ENCODE measurements at regions of chr1 and their contacts with region 1.

Region 1: DNA sequence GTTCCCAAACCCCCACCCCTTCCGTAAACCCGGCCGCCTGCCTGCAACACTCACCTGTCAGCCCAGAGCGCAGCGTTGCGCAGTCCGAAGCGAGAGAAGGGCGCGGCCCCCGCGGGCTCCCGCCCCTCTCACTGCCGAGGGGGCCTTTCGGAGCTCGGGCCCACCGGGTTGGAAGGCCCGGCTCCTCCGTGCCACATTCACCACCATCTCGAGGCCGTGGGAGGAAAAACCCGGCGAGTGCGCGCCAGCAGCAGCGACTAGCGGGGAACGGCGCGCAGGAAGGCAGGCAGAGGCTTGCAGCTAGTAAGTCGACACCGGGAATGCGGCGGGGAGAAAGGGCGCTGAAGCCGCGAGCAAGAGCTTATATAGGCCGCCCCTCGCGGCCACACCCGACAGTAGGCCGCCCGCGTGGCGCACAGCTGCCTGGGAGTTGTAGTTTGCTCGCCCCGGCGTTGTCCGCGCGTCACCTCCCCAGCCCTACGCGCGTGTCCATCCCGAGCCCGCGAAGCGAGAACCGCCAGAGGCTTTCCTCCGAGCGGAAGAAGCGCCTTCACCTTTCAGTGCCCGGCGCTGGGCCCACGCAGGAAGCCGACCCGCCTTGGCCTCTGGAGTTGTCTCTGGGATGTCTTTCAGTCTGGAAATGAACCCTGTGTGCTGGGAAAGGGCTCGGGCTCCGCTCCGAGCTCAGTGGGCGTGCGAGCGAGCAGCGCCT is 10.4 kb upstream of the RAB42 start:
- DNase-seq: peak; percentile 91
- H3K4me3 ChIP-seq: peak overlapping the region; percentile 73
- H3K27ac ChIP-seq: peak overlapping the region; percentile 77
- H3K27me3 ChIP-seq: no peaks in the 10 kb centered on the region
- CTCF ChIP-seq: peak; percentile 1; the same call in 1 of the 2 replicates

Region 2: GRCh38 chr1:28466226-28466778 is 115.4 kb before region 1 on chr1:
- CTCF ChIA-PET with region 1: no interaction called
- POLR2A ChIA-PET with region 1: no interaction called
- DNase-seq: no peak
- H3K4me3 ChIP-seq: no peak overlapping the region
- H3K27ac ChIP-seq: no peak overlapping the region
- H3K27me3 ChIP-seq: no peaks in the 10 kb centered on the region
- CTCF ChIP-seq: no peak

Region 3: DNA sequence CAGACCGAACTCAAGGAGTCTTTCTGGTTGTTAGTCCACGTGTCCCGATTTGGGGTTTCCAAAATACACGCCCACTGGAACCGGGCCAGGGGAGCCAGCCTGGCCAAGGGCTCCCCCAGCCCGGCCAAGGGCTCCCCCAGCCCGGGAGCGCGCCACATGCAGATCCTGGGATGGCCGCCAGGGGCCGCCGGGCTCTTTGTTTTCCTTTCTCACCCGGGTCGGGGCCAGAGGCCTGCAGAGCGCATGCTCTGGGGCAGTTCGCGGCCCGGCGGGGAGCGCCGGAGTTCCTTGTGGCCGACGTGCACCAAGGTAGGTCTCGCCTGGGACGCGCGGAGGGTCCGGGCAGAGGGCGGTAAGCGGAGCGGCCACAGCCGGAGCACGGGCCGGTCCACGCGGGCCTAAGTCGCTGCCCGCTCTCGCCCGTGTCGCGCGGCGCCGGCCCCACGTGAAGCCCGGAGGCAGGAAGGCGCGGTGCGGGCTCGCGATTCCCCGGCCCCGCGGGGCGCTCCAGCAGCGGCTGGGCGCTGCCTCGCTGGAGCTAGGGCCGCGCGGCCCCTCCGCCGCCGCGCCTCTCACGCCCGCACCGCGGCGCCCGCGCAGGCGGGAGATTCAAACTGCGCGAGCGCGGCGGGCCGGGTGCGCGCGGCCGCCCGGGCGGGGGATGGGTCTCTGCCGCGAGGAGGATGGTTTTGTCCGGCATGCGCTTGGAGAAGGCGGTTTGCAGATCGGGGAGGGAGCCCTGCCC is 63.5 kb before region 1 on chr1:
- CTCF ChIA-PET with region 1: interaction called, 3 read pairs
- POLR2A ChIA-PET with region 1: interaction called, 28 read pairs
- DNase-seq: peak; percentile 60
- H3K4me3 ChIP-seq: peak overlapping the region; percentile 81
- H3K27ac ChIP-seq: peak overlapping the region; percentile 61
- H3K27me3 ChIP-seq: no peaks in the 10 kb centered on the region
- CTCF ChIP-seq: peak; percentile 92

Region 4: GRCh38 chr1:28591708-28592320 is 10.1 kb after region 1 on chr1 and contains the start of gene RAB42:
- CTCF ChIA-PET with region 1: interaction called, 3 read pairs
- POLR2A ChIA-PET with region 1: interaction called, 20 read pairs
- DNase-seq: no peak
- H3K4me3 ChIP-seq: peak within 1 kb of the TSS; percentile 60
- H3K27ac ChIP-seq: no peak within 1 kb of the TSS
- H3K27me3 ChIP-seq: no peaks in the 10 kb centered on the region
- CTCF ChIP-seq: no peak
- polyA plus RNA-seq, gene RAB42: 3.4 and 3.7 TPM in 2 replicates

Region 5: GRCh38 chr1:28631713-28632112 is 50.0 kb after region 1 on chr1:
- CTCF ChIA-PET with region 1: no interaction called
- POLR2A ChIA-PET with region 1: interaction called, 11 read pairs
- DNase-seq: no peak
- H3K4me3 ChIP-seq: no peak overlapping the region
- H3K27ac ChIP-seq: no peak overlapping the region
- H3K27me3 ChIP-seq: no peaks in the 10 kb centered on the region
- CTCF ChIP-seq: no peak

Region 6: DNA sequence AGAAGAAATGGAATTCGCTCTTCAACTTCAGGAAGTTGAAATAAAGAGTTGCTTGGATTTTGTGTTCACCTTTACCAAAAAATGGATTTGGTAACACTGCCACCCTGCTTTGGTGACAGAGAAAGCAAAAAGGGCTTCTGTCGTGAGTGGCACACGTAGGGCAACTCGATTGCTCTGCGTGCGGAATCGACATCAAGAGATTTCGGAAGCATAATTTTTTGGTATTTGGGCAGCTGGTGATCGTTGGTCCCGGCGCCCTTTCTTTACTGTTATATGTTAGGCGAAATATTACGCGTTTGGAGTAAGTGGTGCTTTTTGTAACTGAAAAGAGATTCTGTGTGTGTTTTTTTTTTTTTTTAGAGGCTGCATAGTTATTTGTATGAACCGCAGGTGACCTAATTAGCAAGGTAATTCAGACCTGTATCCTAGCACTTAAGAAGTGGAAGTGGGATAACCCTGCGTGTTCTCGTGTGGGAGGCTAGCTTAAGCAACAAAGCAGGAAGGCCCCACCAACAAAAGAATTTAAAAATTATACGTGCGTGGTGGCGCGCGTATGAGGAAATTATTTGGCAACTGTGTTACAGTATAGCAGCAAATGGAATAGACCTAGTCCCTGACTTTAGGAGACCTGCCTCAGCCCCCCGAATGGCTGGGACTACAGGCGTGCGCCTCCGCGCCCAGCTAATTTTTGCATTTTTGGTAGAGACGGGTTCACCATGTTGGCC is 66.9 kb after region 1 on chr1 and contains the start of gene RNU11:
- CTCF ChIA-PET with region 1: no interaction called
- POLR2A ChIA-PET with region 1: interaction called, 41 read pairs
- DNase-seq: peak; percentile 98
- H3K4me3 ChIP-seq: peak within 1 kb of the TSS; percentile 57
- H3K27ac ChIP-seq: peak within 1 kb of the TSS; percentile 89
- H3K27me3 ChIP-seq: no peaks in the 10 kb centered on the region
- CTCF ChIP-seq: no peak
- polyA plus RNA-seq, gene RNU11: not detected in 2 replicates

Measured in AG04450 (cell line).